ENCODE measurements at regions of chr10 and their contacts with region 1.

Region 1: DNA sequence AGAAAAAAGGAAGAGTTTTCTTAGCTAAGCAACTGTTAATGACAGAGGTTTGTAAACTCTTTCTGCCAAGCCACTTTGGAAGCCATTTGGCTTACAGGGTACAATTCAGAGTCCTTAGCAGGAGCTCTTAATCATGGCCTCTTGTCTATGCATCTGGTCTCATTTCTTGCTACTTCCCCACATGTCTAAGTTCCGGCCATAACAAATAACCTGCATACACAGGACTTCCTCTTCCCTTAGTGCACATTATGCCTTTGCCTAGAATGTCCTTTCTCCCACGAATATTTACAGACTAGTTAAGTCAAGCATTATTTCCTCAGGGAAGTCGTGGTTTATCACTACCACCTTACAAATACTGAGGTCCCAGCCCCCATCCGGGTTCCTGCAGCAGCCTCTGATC is 8.6 kb upstream of the UPF2 start:
- DNase-seq: peak; percentile 62
- H3K4me3 ChIP-seq: no peak overlapping the region
- H3K27ac ChIP-seq: peak overlapping the region; percentile 37
- H3K4me1 ChIP-seq: peaks cover 26% of the 10 kb centered on the region
- CTCF ChIP-seq: no peak

Region 2: GRCh38 chr10:12062754-12063482 is 11.7 kb after region 1 on chr10:
- CTCF ChIA-PET with region 1: interaction called, 6 read pairs
- POLR2A ChIA-PET with region 1: interaction called, 20 read pairs
- intact Hi-C with region 1: no loop called
- DNase-seq: peak; percentile 52
- H3K4me3 ChIP-seq: peak overlapping the region; percentile 44
- H3K27ac ChIP-seq: peak overlapping the region; percentile 42
- H3K4me1 ChIP-seq: peaks cover 21% of the 10 kb centered on the region
- CTCF ChIP-seq: no peak

Region 3: GRCh38 chr10:12068449-12069269 is 17.4 kb after region 1 on chr10 and contains the start of gene DHTKD1:
- CTCF ChIA-PET with region 1: interaction called, 6 read pairs
- POLR2A ChIA-PET with region 1: interaction called, 20 read pairs
- intact Hi-C with region 1: no loop called
- DNase-seq: peak; percentile 99
- H3K4me3 ChIP-seq: peak within 1 kb of the TSS; percentile 86
- H3K27ac ChIP-seq: peak within 1 kb of the TSS; percentile 76
- H3K4me1 ChIP-seq: peaks cover 45% of the 10 kb centered on the region
- CTCF ChIP-seq: peak; percentile 50; the same call in 1 of the 2 replicates
- total RNA-seq, gene DHTKD1: 46.5 and 53.1 TPM in 2 replicates

Region 4: GRCh38 chr10:12077580-12078180 is 26.4 kb after region 1 on chr10:
- CTCF ChIA-PET with region 1: interaction called, 3 read pairs
- POLR2A ChIA-PET with region 1: interaction called, 11 read pairs
- intact Hi-C with region 1: no loop called
- DNase-seq: peak; percentile 65
- H3K4me3 ChIP-seq: peak overlapping the region; percentile 6
- H3K27ac ChIP-seq: peak overlapping the region; percentile 63
- H3K4me1 ChIP-seq: peaks cover 63% of the 10 kb centered on the region
- CTCF ChIP-seq: no peak